ENCODE measurements at regions of chr3 and their contacts with region 1.

Region 1: GRCh38 chr3:69691860-69692259 is 47.4 kb upstream of the MITF start:
- DNase-seq: no peak
- H3K4me3 ChIP-seq: no peak overlapping the region
- H3K27ac ChIP-seq: no peak overlapping the region
- H3K4me1 ChIP-seq: peaks cover 0 to 6% (median 0%) of the 10 kb centered on the region in 4 donors
- H3K27me3 ChIP-seq: no peaks in the 10 kb centered on the region
- CTCF ChIP-seq: no peak
- EP300 ChIP-seq: no peak
- POLR2A ChIP-seq: no peak

Region 2: DNA sequence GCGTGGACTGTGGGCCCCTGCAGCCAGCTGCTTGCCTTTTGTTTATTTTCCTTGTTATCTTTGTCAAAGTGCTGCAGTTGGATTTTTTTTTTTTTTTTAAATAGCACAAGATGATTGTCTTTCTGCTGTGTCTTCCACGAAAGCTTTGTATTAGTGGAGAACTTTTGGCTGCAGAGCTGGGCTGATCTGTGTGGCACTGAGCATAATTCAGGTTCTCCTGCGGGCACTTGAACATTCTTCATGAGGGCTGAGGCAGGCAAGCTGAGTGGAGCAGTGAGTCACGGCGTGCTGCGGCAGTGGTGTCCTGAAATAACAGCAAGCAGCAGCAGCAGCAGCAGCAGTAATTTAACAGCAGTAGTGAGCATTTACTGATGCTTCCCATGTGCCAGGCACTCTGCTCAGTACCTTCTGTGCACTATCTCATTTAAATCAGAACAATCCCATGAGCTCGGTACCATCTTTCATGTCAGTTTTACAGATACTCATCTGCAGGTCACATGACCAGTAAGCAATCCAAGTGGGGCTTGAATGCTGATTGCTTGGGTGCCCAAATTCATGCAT is 93.2 kb after region 1 on chr3:
- in situ Hi-C with region 1: loop called in 1 of 4 experiments (anchors 10 kb)
- intact Hi-C with region 1: loop called (anchors 2 kb)
- DNase-seq: peak; percentile 21
- H3K4me3 ChIP-seq: no peak overlapping the region
- H3K27ac ChIP-seq: peak overlapping the region; percentile 54 to 70 (median 63)
- H3K4me1 ChIP-seq: peaks cover 0 to 36% (median 1%) of the 10 kb centered on the region in 4 donors
- H3K27me3 ChIP-seq: no peaks in the 10 kb centered on the region
- CTCF ChIP-seq: no peak
- EP300 ChIP-seq: no peak
- POLR2A ChIP-seq: no peak

Region 3: GRCh38 chr3:69791919-69792399 is 100.1 kb after region 1 on chr3:
- in situ Hi-C with region 1: loop called in 1 of 4 experiments (anchors 10 kb)
- intact Hi-C with region 1: no loop called
- DNase-seq: no peak
- H3K4me3 ChIP-seq: no peak overlapping the region
- H3K27ac ChIP-seq: peak overlapping the region; percentile 31 to 58 (median 50)
- H3K4me1 ChIP-seq: peaks cover 4 to 30% (median 7%) of the 10 kb centered on the region in 4 donors
- H3K27me3 ChIP-seq: no peaks in the 10 kb centered on the region
- CTCF ChIP-seq: peak in 4 of 5 experiments; percentile 23 to 47 (median 24)
- EP300 ChIP-seq: no peak
- POLR2A ChIP-seq: no peak

Region 4: DNA sequence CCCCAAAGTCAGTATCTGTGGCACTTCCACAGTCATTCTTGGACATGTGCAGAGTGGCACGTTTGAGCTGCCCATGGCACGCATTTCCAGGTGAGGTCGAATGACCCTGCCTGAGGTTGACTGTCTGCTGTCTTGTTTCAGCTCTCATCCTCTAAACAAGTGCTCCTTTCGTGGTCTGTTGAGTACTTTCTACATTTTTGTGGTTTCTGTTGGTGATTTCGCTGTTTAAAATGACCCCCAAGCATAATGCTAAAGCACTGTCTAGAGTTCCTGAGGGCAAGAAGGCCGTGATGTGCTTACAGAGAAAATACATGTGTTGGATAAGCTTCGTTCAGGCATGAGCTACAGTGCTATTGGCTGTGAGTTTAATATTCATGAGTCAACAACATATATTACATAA is 267.7 kb after region 1 on chr3:
- in situ Hi-C with region 1: loop called in 1 of 4 experiments (anchors 10 kb)
- intact Hi-C with region 1: no loop called
- DNase-seq: no peak
- H3K4me3 ChIP-seq: no peak overlapping the region
- H3K27ac ChIP-seq: no peak overlapping the region
- H3K4me1 ChIP-seq: no peaks in the 10 kb centered on the region
- H3K27me3 ChIP-seq: no peaks in the 10 kb centered on the region
- CTCF ChIP-seq: no peak
- EP300 ChIP-seq: no peak
- POLR2A ChIP-seq: no peak